Uterus (tissue), 4 donors: ENCODE measurements at regions of chr11 and their contacts with region 1.

Region 1: GRCh38 chr11:68383976-68384501 is 71.6 kb downstream of the LRP5 start:
- DNase-seq: peak; percentile 63 to 72
- H3K4me3 ChIP-seq: no peak overlapping the region
- H3K27ac ChIP-seq: no peak overlapping the region
- H3K4me1 ChIP-seq: peaks cover 0 to 13% of the 10 kb centered on the region in 2 donors
- H3K27me3 ChIP-seq: no peaks in the 10 kb centered on the region
- CTCF ChIP-seq: peak; percentile 77 to 90 (median 85)
- POLR2A ChIP-seq: no peak

Region 2: GRCh38 chr11:68312117-68312779 is 71.8 kb before region 1 on chr11 and contains the start of gene LRP5:
- intact Hi-C with region 1: loop called (anchors 10 kb)
- DNase-seq: no peak
- H3K4me3 ChIP-seq: peak within 1 kb of the TSS; percentile 54 to 65
- H3K27ac ChIP-seq: peak within 1 kb of the TSS; percentile 74 to 83
- H3K4me1 ChIP-seq: peaks cover 0 to 4% of the 10 kb centered on the region in 2 donors
- H3K27me3 ChIP-seq: no peaks in the 10 kb centered on the region
- CTCF ChIP-seq: no peak
- POLR2A ChIP-seq: peak in 1 of 2 donors; percentile 26
- total RNA-seq, gene LRP5: 19.1 to 86.2 (median 43.9) TPM

Region 3: GRCh38 chr11:69480547-69481392 is 1096.7 kb after region 1 on chr11:
- intact Hi-C with region 1: no loop called
- DNase-seq: no peak
- H3K4me3 ChIP-seq: no peak overlapping the region
- H3K27ac ChIP-seq: no peak overlapping the region
- H3K4me1 ChIP-seq: no peaks in the 10 kb centered on the region
- H3K27me3 ChIP-seq: no peaks in the 10 kb centered on the region
- CTCF ChIP-seq: no peak
- POLR2A ChIP-seq: no peak